H1 (cell line): ENCODE measurements at regions of chrX and their contacts with region 1.

Region 1: GRCh38 chrX:108211301-108211700 is 119.7 kb downstream of the ATG4A start:
- DNase-seq: no peak
- H3K4me3 ChIP-seq: no peak overlapping the region
- H3K27ac ChIP-seq: no peak overlapping the region
- H3K4me1 ChIP-seq: no peaks in the 10 kb centered on the region
- H3K27me3 ChIP-seq: no peaks in the 10 kb centered on the region
- CTCF ChIP-seq: no peak
- EP300 ChIP-seq: no peak
- POLR2A ChIP-seq: no peak
- RAD21 ChIP-seq: no peak

Region 2: DNA sequence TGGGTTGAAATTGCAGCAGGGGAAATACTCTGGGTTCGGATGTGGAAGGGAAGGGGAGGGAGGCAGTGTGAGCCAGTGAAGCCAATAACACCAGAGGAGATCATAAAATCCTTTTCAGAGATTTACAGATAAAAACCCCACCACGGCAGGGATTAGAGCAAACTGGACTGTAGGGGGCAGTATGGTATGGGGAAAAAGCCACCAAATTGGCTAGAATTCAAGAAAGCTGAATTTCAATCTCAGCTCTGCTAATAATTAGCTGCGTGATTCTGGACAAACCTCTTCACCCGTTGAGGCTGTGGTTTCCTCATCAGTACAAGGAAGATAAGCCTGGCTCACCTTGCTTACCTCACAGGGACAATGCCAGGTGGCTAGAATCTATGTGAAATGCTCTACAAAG is 11.6 kb before region 1 on chrX:
- CTCF ChIA-PET with region 1: interaction called, 10 read pairs
- POLR2A ChIA-PET with region 1: no interaction called
- DNase-seq: peak in 1 of 2 experiments; percentile 50
- H3K4me3 ChIP-seq: no peak overlapping the region
- H3K27ac ChIP-seq: no peak overlapping the region
- H3K4me1 ChIP-seq: no peaks in the 10 kb centered on the region
- H3K27me3 ChIP-seq: no peaks in the 10 kb centered on the region
- CTCF ChIP-seq: peak in 2 of 3 experiments; percentile 41 to 61; a peak in 2 of 4 replicates
- EP300 ChIP-seq: no peak
- POLR2A ChIP-seq: no peak
- RAD21 ChIP-seq: peak; percentile 60 to 64

Region 3: DNA sequence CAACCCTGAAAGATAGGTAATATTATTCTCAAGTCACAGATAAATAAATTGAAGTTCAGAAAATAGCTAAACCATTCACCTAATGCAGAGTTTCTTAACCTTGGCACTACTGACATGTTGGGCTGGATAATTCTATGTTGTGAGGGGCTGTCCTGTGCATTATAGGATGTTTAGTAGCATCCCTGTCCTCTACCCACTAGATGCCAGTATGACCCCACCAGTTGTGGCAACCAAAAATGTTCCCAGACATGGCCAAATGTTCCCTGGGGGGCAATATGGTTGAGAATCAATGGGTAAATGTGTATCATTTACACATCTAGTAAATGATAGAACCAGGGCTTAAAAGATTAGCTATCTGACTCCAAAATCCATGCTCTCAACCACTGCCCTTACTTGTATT is 86.0 kb after region 1 on chrX:
- CTCF ChIA-PET with region 1: no interaction called
- POLR2A ChIA-PET with region 1: no interaction called
- DNase-seq: no peak
- H3K4me3 ChIP-seq: no peak overlapping the region
- H3K27ac ChIP-seq: no peak overlapping the region
- H3K4me1 ChIP-seq: peaks cover 0 to 9% (median 2%) of the 10 kb centered on the region in 4 experiments; a peak in 3 of 7 replicates
- H3K27me3 ChIP-seq: no peaks in the 10 kb centered on the region
- CTCF ChIP-seq: no peak
- EP300 ChIP-seq: no peak
- POLR2A ChIP-seq: no peak
- RAD21 ChIP-seq: peak; percentile 23 to 39; a peak in 3 of 4 replicates